GM12878 (cell line): ENCODE measurements at regions of chr17 and their contacts with region 1.

Region 1: GRCh38 chr17:38667099-38667786 is 7.5 kb downstream of the EPOP start:
- DNase-seq: no peak
- ATAC-seq: peak; percentile 76
- H3K4me3 ChIP-seq: no peak overlapping the region
- H3K27ac ChIP-seq: no peak overlapping the region
- H3K4me1 ChIP-seq: peaks cover 5% of the 10 kb centered on the region
- H3K27me3 ChIP-seq: peaks cover 6 to 11% of the 10 kb centered on the region in 2 experiments; a peak in 3 of 4 replicates
- CTCF ChIP-seq: peak; percentile 100; a peak in 5 of 6 replicates
- EP300 ChIP-seq: no peak
- POLR2A ChIP-seq: no peak
- RAD21 ChIP-seq: peak; percentile 100

Region 2: GRCh38 chr17:38444151-38444550 is 223.1 kb before region 1 on chr17:
- CTCF ChIA-PET with region 1: interaction called, 5 read pairs
- POLR2A ChIA-PET with region 1: no interaction called
- RAD21 ChIA-PET with region 1: no interaction called
- SMC1A ChIA-PET with region 1: no interaction called
- in situ Hi-C with region 1: no loop called
- intact Hi-C with region 1: loop called (anchors 1 kb)
- DNase-seq: no peak
- ATAC-seq: peak; percentile 94
- H3K4me3 ChIP-seq: no peak overlapping the region
- H3K27ac ChIP-seq: no peak overlapping the region
- H3K4me1 ChIP-seq: peaks cover 5% of the 10 kb centered on the region; the same call in 1 of the 2 replicates
- H3K27me3 ChIP-seq: no peaks in the 10 kb centered on the region
- CTCF ChIP-seq: peak; percentile 85 to 93 (median 89)
- EP300 ChIP-seq: no peak
- POLR2A ChIP-seq: no peak
- RAD21 ChIP-seq: peak; percentile 70

Region 3: GRCh38 chr17:38509008-38509771 is 158.1 kb before region 1 on chr17:
- CTCF ChIA-PET with region 1: interaction called, 6 read pairs
- POLR2A ChIA-PET with region 1: no interaction called
- RAD21 ChIA-PET with region 1: no interaction called
- SMC1A ChIA-PET with region 1: no interaction called
- in situ Hi-C with region 1: no loop called
- intact Hi-C with region 1: loop called (anchors 5 kb)
- DNase-seq: no peak
- ATAC-seq: peak; percentile 97
- H3K4me3 ChIP-seq: no peak overlapping the region
- H3K27ac ChIP-seq: no peak overlapping the region
- H3K4me1 ChIP-seq: peaks cover 3% of the 10 kb centered on the region; the same call in 1 of the 2 replicates
- H3K27me3 ChIP-seq: peaks cover 4 to 10% of the 10 kb centered on the region in 2 experiments; a peak in 3 of 4 replicates
- CTCF ChIP-seq: peak; percentile 69 to 82 (median 79)
- EP300 ChIP-seq: no peak
- POLR2A ChIP-seq: no peak
- RAD21 ChIP-seq: peak; percentile 27; the same call in 1 of the 2 replicates

Region 4: DNA sequence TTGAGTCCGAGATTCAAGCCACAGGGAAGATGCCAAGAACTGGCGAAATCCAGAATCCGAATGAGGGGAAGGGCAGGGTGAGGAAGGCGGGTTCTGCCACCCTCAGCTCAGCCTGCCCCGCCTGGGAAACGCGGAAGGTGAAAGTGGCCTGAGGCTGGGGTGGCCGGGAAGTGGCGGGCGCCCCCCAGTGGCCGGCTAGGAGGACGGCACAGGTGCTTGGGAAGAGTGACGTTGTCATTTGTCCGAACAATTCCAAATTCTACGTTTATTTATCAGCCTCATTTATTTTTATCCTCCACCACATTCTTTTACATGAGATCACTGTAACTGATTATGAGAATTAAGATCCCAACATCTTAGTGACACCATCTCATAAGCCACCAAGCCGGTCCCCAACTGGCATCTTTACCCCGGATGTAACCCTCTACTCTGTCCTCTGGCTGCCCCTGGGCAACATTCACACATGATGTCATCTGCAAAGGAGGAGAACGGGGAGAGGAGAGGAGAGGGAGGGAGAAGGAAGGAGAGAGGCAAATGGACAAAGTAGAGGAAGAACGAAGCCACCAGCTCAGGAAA is 82.8 kb before region 1 on chr17:
- CTCF ChIA-PET with region 1: interaction called, 187 read pairs
- POLR2A ChIA-PET with region 1: no interaction called
- RAD21 ChIA-PET with region 1: interaction called, 38 read pairs
- SMC1A ChIA-PET with region 1: interaction called, 14 read pairs
- in situ Hi-C with region 1: no loop called
- intact Hi-C with region 1: loop called (anchors 5 kb)
- DNase-seq: no peak
- ATAC-seq: peak; percentile 93
- H3K4me3 ChIP-seq: no peak overlapping the region
- H3K27ac ChIP-seq: no peak overlapping the region
- H3K4me1 ChIP-seq: peaks cover 8% of the 10 kb centered on the region
- H3K27me3 ChIP-seq: peaks cover 0 to 4% of the 10 kb centered on the region in 2 experiments; a peak in 3 of 4 replicates
- CTCF ChIP-seq: peak; percentile 88 to 93 (median 91)
- EP300 ChIP-seq: no peak
- POLR2A ChIP-seq: no peak
- RAD21 ChIP-seq: peak; percentile 75

Region 5: DNA sequence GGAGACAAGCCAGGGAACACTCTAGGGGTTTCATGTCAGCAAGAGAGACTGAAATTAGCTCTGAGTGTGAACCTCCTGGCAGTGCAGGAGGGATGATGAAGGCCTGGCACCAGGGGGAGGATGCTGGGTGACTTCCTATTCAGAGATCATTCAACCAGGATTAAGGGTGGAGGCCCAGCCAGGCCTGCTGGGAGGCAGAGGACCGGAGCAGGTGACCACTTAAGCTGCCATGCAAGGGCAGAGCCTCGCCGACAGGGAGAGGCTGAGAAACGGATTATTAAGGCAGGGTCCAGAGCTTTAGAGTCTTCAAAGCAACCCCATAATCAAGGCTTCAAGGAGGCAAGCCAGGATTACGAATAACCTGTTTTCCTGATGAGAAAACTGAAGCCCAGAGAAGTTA is 50.9 kb before region 1 on chr17:
- CTCF ChIA-PET with region 1: interaction called, 11 read pairs
- POLR2A ChIA-PET with region 1: no interaction called
- RAD21 ChIA-PET with region 1: interaction called, 4 read pairs
- SMC1A ChIA-PET with region 1: interaction called, 5 read pairs
- in situ Hi-C with region 1: no loop called
- intact Hi-C with region 1: no loop called
- DNase-seq: no peak
- ATAC-seq: no peak; the same call in 2 of the 3 replicates
- H3K4me3 ChIP-seq: no peak overlapping the region
- H3K27ac ChIP-seq: no peak overlapping the region
- H3K4me1 ChIP-seq: peaks cover 9% of the 10 kb centered on the region
- H3K27me3 ChIP-seq: no peaks in the 10 kb centered on the region
- CTCF ChIP-seq: no peak
- EP300 ChIP-seq: no peak
- POLR2A ChIP-seq: no peak
- RAD21 ChIP-seq: no peak

Region 6: GRCh38 chr17:38735161-38735997 is 68.1 kb after region 1 on chr17:
- CTCF ChIA-PET with region 1: interaction called, 87 read pairs
- POLR2A ChIA-PET with region 1: interaction called, 4 read pairs
- RAD21 ChIA-PET with region 1: interaction called, 11 read pairs
- SMC1A ChIA-PET with region 1: interaction called, 4 read pairs
- in situ Hi-C with region 1: no loop called
- intact Hi-C with region 1: no loop called
- DNase-seq: no peak
- ATAC-seq: peak; percentile 57
- H3K4me3 ChIP-seq: no peak overlapping the region
- H3K27ac ChIP-seq: no peak overlapping the region
- H3K4me1 ChIP-seq: peaks cover 20% of the 10 kb centered on the region
- H3K27me3 ChIP-seq: no peaks in the 10 kb centered on the region
- CTCF ChIP-seq: peak; percentile 92 to 96 (median 95); a peak in 5 of 6 replicates
- EP300 ChIP-seq: no peak
- POLR2A ChIP-seq: no peak
- RAD21 ChIP-seq: peak; percentile 75